ENCODE measurements at regions of chr9 and their contacts with region 1.

Region 1: DNA sequence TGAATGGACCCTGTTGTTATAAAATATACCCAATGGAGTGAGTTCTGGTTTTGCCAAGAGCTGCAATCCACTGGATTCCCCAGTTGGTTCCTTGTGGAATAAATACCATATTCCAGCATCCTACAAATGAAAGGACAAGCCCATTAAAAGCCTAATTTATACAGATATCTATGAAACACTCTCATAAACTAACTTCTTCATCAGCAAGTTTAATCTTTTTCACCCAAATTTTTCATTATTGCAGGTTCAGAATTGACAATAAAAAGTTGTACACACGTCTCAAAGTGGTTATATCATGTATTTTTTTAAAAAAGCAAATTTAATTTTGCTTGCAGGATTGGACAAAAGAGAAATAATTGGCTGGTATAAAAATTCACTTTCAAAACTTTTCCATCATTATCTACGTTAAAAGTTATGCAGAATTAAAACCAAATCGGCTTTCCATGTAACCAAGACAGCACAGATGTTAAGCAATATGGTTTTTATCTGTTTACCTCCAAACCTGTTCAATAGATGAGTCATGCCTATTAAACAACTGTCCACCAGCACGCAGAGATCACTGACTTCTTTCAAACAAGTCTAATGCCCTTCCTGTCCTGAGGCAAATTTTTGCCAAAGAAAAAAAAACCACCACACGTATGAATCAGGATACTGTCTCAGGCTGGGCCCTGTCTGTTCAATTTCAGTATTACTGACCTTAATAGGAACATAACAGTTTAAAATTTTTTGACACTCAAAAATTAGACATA is 42.5 kb downstream of the CEMIP2 start:
- DNase-seq: peak in 1 of 2 donors; percentile 56
- H3K4me3 ChIP-seq: no peak overlapping the region
- H3K27ac ChIP-seq: peak overlapping the region in 1 of 2 donors; percentile 37
- H3K4me1 ChIP-seq: no peaks in the 10 kb centered on the region
- H3K27me3 ChIP-seq: no peaks in the 10 kb centered on the region
- CTCF ChIP-seq: no peak
- POLR2A ChIP-seq: no peak

Region 2: DNA sequence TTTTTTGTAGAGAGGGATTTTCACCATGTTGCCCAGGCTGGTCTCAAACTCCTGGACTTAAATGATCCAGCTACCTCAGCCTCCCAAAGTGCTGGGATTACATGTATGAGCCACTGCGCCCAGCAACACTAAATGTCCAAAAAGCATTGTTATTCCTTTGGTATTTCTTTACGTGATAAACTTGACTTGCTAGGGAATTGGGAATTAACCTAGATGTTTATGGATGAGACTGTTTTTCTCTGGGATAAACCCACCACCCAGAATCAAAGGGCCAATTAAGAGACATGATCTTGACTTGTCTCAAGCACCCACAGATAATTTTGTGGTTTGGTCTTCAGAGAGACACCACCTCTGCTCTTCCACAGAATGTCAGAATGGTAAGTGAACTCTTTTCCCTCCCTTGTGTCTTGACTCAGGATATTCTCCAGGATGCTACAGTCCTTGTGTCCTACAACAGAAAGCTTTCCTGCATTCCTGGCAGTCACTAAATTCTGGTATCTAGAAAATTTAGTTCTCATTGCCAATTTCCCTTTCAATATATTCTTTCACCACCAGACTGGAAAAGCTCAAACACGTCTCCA is 1171.4 kb after region 1 on chr9:
- intact Hi-C with region 1: loop called (anchors 5 kb)
- DNase-seq: no peak
- H3K4me3 ChIP-seq: no peak overlapping the region
- H3K27ac ChIP-seq: no peak overlapping the region
- H3K4me1 ChIP-seq: no peaks in the 10 kb centered on the region
- H3K27me3 ChIP-seq: no peaks in the 10 kb centered on the region
- CTCF ChIP-seq: no peak
- POLR2A ChIP-seq: no peak

Measured in breast epithelium (tissue), 4 donors.